Mucosa of descending colon (tissue), 3 donors: ENCODE measurements at regions of chrX and their contacts with region 1.

Region 1: DNA sequence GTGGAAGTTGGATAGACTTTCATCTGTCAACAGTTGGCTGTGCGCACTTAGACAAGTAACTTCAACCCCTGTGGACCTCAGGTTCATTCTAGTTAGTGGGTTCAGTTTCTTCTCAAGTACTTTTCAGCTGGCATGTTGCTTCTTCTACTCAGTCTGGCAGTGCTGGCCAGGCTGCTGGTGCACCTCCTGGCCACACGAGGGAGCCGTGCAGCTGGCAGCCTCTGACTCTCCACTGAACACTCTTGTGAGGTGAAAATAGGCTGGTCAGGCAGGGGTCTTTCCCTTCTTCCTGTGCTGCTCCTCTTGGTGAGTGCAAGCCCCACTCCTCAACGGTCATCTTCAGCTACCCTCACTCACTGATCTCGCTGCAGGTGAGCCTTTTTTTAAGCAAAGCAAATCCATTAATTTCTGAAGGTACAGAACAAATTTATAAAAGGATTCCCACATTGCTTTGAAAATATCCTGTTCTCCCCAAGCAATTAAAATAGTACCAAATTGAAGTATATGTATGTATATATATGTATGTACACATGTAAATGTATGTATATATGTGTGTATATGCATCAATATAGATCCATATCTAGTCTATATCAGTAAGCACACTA is 30.6 kb downstream of the LONRF3 start:
- DNase-seq: peak in 2 of 3 donors; percentile 58 to 66
- ATAC-seq: peak; percentile 89
- H3K4me3 ChIP-seq: no peak overlapping the region
- H3K4me1 ChIP-seq: no peaks in the 10 kb centered on the region
- CTCF ChIP-seq: peak; percentile 65

Region 2: DNA sequence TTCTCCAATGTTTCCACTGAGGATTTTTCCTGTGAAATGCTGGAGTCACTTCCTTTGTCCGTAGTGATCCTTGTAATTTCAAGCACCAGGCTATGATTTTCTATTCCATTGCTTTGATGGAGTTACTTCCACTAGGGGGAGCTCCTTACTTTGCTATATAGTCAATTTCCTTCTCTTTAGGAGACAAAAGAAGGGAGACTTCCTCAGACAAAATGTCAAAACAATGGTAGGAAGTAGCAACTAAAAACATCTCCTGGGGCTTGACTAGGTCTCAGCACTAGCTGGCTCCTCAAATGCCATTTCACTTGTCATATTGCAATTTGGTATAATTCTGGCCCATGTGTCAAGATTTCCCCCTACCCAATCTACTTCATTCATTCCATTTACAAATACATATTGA is 157.3 kb before region 1 on chrX:
- intact Hi-C with region 1: loop called (anchors 5 to 10 kb)
- DNase-seq: peak in 1 of 3 donors; percentile 19
- ATAC-seq: peak; percentile 72
- H3K4me3 ChIP-seq: no peak overlapping the region
- H3K4me1 ChIP-seq: no peaks in the 10 kb centered on the region
- CTCF ChIP-seq: peak; percentile 9